ENCODE measurements at regions of chr1 and their contacts with region 1.

Region 1: GRCh38 chr1:162633081-162633762 is 958 bp downstream of the DDR2 start:
- DNase-seq: peak in 2 of 3 donors; percentile 24 to 45
- ATAC-seq: peak; percentile 54 to 69
- H3K4me3 ChIP-seq: peak overlapping the region; percentile 65
- H3K27ac ChIP-seq: peak overlapping the region; percentile 96
- H3K4me1 ChIP-seq: peaks cover 3% of the 10 kb centered on the region
- H3K27me3 ChIP-seq: no peaks in the 10 kb centered on the region

Region 2: GRCh38 chr1:162678439-162678838 is 45.2 kb after region 1 on chr1:
- intact Hi-C with region 1: loop called in 2 of 4 experiments (anchors 5 to 10 kb)
- DNase-seq: no peak
- ATAC-seq: peak; percentile 29 to 47
- H3K4me3 ChIP-seq: no peak overlapping the region
- H3K27ac ChIP-seq: peak overlapping the region; percentile 49
- H3K4me1 ChIP-seq: peaks cover 8% of the 10 kb centered on the region
- H3K27me3 ChIP-seq: no peaks in the 10 kb centered on the region

Region 3: DNA sequence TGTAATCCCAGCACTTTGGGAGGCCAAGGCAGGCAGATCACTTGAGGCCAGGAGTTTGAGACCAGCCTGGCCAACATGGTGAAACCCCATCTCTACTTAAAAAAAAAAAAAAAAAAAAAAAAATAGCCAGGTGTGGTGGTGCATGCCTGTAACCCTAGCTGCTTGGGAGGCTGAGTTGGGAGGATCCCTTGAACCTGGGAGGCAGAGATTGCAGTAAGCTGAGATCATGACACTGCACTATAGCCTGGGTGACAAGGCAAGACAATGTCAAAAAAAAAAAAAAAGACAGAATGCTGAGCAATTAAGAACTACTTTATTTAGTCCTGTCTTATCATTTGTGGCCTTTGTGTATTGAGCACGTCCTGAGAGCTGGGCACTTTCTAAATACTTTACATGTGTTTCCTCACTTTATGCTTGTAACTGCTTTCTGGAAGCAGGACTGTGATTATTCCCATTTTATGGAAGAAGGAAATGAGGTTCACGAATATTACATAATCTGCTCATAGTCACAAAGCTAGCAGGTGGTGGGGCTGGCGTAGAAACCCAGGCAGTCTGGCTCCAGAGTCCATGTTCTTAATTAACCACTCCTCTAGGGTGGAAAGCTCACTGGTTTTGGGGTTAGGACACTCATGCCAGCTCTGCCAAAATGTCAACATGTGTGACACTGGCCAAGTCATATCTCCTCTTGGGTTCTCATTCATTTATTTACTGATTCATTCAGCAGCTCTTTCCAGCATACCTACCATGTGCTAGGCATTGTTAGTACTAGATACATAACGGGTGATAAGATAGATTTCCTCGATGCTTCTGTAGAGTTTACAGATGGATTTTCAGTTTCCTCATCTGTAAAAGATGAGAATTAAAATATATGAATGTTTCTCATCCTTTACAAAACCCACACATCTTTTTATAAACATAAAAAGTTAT is 56.8 kb after region 1 on chr1:
- intact Hi-C with region 1: loop called in 1 of 4 experiments (anchors 10 kb)
- DNase-seq: peak; percentile 42 to 73 (median 44)
- ATAC-seq: peak; percentile 13 to 19
- H3K4me3 ChIP-seq: no peak overlapping the region
- H3K27ac ChIP-seq: peak overlapping the region; percentile 89
- H3K4me1 ChIP-seq: peaks cover 21% of the 10 kb centered on the region
- H3K27me3 ChIP-seq: no peaks in the 10 kb centered on the region